ENCODE measurements at regions of chr16 and their contacts with region 1.

Region 1: GRCh38 chr16:12271006-12271405 is 294.5 kb downstream of the SNX29 start:
- DNase-seq: no peak
- ATAC-seq: no peak
- H3K4me3 ChIP-seq: no peak overlapping the region
- H3K27ac ChIP-seq: no peak overlapping the region
- H3K4me1 ChIP-seq: no peaks in the 10 kb centered on the region
- H3K27me3 ChIP-seq: no peaks in the 10 kb centered on the region
- CTCF ChIP-seq: peak in 1 of 5 experiments; percentile 31
- POLR2A ChIP-seq: no peak

Region 2: GRCh38 chr16:12089492-12090150 is 181.4 kb before region 1 on chr16:
- in situ Hi-C with region 1: no loop called
- intact Hi-C with region 1: loop called (anchors 2 kb)
- DNase-seq: no peak
- ATAC-seq: peak in 1 of 2 donors; percentile 39
- H3K4me3 ChIP-seq: peak overlapping the region in 1 of 4 donors; percentile 24
- H3K27ac ChIP-seq: no peak overlapping the region
- H3K4me1 ChIP-seq: peaks cover 11% of the 10 kb centered on the region in 2 donors
- H3K27me3 ChIP-seq: no peaks in the 10 kb centered on the region
- CTCF ChIP-seq: no peak
- POLR2A ChIP-seq: no peak

Region 3: GRCh38 chr16:12158428-12158827 is 112.6 kb before region 1 on chr16:
- in situ Hi-C with region 1: loop called in 1 of 4 experiments (anchors 25 kb)
- intact Hi-C with region 1: no loop called
- DNase-seq: no peak
- ATAC-seq: no peak
- H3K4me3 ChIP-seq: no peak overlapping the region
- H3K27ac ChIP-seq: no peak overlapping the region
- H3K4me1 ChIP-seq: peaks cover 0 to 7% of the 10 kb centered on the region in 2 donors
- H3K27me3 ChIP-seq: no peaks in the 10 kb centered on the region
- CTCF ChIP-seq: no peak
- POLR2A ChIP-seq: no peak

Region 4: DNA sequence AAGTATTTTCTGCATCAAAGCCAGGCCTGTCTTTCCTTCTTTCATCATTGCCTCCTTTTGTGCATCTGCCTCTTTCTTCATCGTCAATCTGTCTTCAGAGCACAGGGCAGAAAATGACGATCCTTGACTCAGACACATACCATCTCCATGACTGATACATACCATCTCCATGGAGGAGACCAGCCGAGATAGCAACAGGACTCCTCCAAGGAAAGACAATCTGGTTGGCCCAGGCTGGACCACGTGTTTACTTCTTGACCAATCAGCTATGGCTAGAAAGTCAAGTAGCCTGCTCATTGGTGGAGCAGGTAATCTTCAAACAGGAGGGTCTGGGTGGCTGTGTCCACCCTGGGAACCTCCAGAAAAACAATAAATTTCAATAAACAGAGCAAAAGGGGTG is 368.0 kb after region 1 on chr16:
- in situ Hi-C with region 1: no loop called
- intact Hi-C with region 1: no loop called
- DNase-seq: no peak
- ATAC-seq: no peak
- H3K4me3 ChIP-seq: no peak overlapping the region
- H3K27ac ChIP-seq: no peak overlapping the region
- H3K4me1 ChIP-seq: no peaks in the 10 kb centered on the region
- H3K27me3 ChIP-seq: no peaks in the 10 kb centered on the region
- CTCF ChIP-seq: no peak
- POLR2A ChIP-seq: no peak